Lower leg skin (tissue), 4 donors: ENCODE measurements at regions of chr16 and their contacts with region 1.

Region 1: DNA sequence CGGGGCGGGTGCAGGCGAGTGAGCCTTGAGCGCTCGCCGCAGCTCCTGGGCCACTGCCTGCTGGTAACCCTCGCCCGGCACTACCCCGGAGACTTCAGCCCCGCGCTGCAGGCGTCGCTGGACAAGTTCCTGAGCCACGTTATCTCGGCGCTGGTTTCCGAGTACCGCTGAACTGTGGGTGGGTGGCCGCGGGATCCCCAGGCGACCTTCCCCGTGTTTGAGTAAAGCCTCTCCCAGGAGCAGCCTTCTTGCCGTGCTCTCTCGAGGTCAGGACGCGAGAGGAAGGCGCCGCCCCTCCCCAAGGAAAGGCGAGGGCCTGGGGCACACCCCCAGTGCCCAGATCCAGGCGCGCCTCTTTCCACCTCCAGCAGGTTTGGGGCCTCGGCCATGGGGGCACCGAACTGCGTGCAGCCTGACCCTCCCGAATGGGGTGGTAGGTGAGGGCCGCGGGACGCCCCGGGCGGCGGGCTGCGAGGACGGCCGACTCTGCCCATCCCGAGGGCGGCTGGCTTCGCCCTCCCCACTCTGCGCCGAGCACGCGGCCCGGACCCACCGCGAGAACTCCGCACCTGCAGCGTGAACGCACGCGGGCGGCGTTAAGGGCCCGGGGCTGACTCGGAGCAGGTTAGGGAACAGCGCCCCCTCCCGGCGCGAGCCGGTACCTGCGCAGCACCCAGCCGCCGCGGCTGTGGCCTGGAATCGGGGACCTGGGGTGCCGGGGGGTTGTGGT is 844 bp downstream of the HBQ1 start:
- DNase-seq: peak; percentile 27 to 94
- H3K4me3 ChIP-seq: no peak overlapping the region
- CTCF ChIP-seq: peak in 1 of 3 donors; percentile 16
- POLR2A ChIP-seq: no peak

Region 2: GRCh38 chr16:106623-107324 is 74.3 kb before region 1 on chr16:
- intact Hi-C with region 1: loop called (anchors 5 kb)
- DNase-seq: peak in 1 of 2 donors; percentile 60
- H3K4me3 ChIP-seq: no peak overlapping the region
- CTCF ChIP-seq: peak in 1 of 3 donors; percentile 39
- POLR2A ChIP-seq: no peak

Region 3: DNA sequence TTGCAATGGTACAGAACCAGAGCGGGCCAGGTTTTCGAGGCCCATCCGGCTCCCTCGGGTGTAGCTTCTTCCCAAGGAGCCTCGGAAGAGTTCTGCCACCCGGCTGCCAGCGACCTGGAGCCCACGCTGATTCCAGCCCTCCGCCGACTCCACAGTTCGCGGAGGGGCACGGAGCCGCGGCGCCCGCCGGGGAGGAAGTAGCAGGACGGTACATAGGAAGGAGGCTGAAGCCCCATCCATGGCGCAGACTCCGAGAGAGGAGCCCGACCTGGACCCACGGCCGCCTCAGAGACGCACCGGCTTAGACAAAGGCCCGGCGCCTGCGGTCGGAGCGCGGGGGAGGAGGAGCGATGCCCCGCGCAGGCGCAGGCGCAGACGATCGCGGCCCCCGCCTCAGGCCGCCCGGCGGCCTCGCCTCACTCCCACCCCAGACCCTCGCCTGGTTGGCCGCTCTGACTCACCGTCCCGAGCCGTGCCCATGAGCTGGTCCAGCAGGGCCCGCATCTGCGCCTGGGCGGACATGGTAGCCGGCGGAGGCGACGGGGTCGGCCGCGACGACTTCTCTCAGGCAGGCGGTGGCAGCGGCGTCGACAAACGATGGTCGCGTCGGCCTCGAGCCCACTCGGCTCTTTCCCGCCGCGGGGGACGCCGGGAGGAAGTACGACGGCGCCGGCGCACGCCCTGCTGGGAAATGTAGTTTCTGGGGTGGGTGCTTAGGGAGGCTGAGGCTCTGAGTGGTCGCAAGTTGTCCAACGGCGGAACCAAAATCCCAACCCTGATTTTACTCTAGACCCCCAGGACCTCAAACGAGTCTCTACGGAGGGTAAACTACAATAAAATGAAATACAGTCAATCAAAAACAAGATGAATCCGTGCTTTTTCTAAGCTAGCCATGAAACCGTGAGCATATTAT is 48.0 kb after region 1 on chr16 and contains the start of gene LUC7L:
- intact Hi-C with region 1: no loop called
- DNase-seq: peak; percentile 77 to 97
- H3K4me3 ChIP-seq: peak within 1 kb of the TSS; percentile 74
- CTCF ChIP-seq: no peak
- POLR2A ChIP-seq: peak in 1 of 2 donors; percentile 83
- total RNA-seq, gene LUC7L: 38.4 to 111 (median 43.5) TPM

Region 4: DNA sequence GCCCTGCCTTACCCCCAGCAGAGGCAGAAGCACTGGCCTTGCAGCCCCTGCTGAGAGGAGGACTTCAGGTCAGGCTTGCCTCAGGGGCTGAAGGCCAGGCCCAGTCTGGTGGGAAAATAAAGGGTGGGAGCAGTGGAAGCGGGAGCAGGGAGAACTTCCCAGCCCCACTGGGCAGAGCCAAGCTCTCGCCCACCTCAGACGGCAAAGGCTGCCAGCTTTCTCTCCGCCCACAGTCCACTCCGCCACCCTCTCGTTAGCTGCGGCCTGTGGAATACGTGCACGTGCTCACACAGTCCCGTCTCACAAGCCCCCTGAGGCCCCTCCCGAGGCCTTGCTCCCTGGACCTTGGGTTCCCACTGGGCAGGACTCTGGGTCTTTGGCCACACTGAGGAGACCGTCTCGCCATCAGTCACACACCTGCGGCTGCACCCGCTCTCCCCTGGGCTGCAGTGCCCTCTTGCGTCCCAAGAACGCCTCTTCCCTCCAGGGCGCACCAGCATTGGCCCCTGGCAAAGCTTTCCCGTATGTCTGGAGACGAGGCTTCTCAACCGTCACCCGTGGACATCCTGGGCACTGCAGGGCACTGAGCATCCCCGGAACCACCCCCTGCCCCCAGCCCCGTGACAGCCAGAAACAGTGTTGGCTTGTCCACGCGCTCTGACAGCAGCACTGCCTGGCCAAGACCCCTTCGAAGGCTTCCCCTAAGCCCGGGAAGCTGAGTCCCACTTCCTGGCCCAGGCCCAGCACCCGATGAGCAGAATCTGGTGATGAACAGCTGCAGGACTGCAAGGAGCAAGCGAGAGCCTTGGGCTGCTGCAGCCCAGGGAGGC is 181.0 kb after region 1 on chr16:
- intact Hi-C with region 1: no loop called
- DNase-seq: no peak
- H3K4me3 ChIP-seq: no peak overlapping the region
- CTCF ChIP-seq: no peak
- POLR2A ChIP-seq: no peak